Activated B cell treated with CpG ODN at 0.5 μM for 24 hours (primary cell): ENCODE measurements at regions of chr11 and their contacts with region 1.

Region 1: DNA sequence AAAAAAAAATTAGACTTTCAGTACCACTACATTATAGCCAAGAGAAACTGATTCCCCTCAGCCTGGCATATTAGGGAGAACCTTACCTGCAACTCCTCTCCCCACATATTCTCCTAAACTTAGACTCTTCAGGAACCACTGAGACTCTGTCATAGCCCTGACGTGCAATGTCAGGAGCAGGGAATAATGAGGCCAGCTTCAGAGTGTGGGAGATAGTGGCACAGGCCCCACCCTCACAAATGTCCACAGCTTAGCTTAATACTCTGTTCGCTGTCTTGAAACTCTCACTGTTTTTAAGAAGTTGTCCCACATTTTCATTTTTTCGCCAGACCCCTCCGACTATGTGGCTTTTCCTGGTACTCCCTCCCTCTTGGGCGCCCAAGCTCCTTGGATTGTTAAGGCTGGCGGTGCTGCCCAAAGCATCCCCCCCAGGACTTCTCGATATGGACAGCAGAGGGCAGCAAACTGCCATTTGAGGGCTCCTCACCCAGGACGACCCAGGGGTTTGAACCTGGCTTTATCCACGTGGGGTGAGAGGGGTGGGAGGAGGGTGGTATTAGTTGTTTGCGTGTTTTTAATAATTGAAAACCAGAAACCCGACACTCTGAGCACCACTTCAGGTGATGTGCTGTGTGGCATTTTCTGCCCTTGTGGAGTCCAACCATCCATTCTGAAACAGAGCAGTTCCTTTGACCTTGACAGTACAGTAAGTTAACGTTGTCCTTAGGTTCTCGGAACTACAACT is 45.2 kb upstream of the RASSF10 start:
- DNase-seq: peak; percentile 40
- ATAC-seq: peak; percentile 49
- H3K4me3 Mint-ChIP-seq: no peak overlapping the region
- H3K27ac Mint-ChIP-seq: no peak overlapping the region
- H3K4me1 Mint-ChIP-seq: no peaks in the 10 kb centered on the region
- H3K27me3 Mint-ChIP-seq: no peaks in the 10 kb centered on the region
- CTCF ChIP-seq: no peak

Region 2: GRCh38 chr11:12944889-12945517 is 19.0 kb before region 1 on chr11:
- CTCF ChIA-PET with region 1: no interaction called
- POLR2A ChIA-PET with region 1: no interaction called
- intact Hi-C with region 1: no loop called
- DNase-seq: no peak
- ATAC-seq: no peak
- H3K4me3 Mint-ChIP-seq: no peak overlapping the region
- H3K27ac Mint-ChIP-seq: no peak overlapping the region
- H3K4me1 Mint-ChIP-seq: no peaks in the 10 kb centered on the region
- H3K27me3 Mint-ChIP-seq: peaks cover 11% of the 10 kb centered on the region
- CTCF ChIP-seq: no peak

Region 3: GRCh38 chr11:12981676-12982531 is 17.9 kb after region 1 on chr11:
- CTCF ChIA-PET with region 1: no interaction called
- POLR2A ChIA-PET with region 1: no interaction called
- intact Hi-C with region 1: no loop called
- DNase-seq: no peak
- ATAC-seq: no peak
- H3K4me3 Mint-ChIP-seq: no peak overlapping the region
- H3K27ac Mint-ChIP-seq: no peak overlapping the region
- H3K4me1 Mint-ChIP-seq: no peaks in the 10 kb centered on the region
- H3K27me3 Mint-ChIP-seq: peaks cover 11% of the 10 kb centered on the region
- CTCF ChIP-seq: no peak

Region 4: GRCh38 chr11:13183094-13183825 is 219.3 kb after region 1 on chr11:
- CTCF ChIA-PET with region 1: no interaction called
- POLR2A ChIA-PET with region 1: no interaction called
- intact Hi-C with region 1: loop called (anchors 1 kb)
- DNase-seq: no peak
- ATAC-seq: no peak
- H3K4me3 Mint-ChIP-seq: no peak overlapping the region
- H3K27ac Mint-ChIP-seq: no peak overlapping the region
- H3K4me1 Mint-ChIP-seq: no peaks in the 10 kb centered on the region
- H3K27me3 Mint-ChIP-seq: peaks cover 4% of the 10 kb centered on the region
- CTCF ChIP-seq: no peak

Region 5: DNA sequence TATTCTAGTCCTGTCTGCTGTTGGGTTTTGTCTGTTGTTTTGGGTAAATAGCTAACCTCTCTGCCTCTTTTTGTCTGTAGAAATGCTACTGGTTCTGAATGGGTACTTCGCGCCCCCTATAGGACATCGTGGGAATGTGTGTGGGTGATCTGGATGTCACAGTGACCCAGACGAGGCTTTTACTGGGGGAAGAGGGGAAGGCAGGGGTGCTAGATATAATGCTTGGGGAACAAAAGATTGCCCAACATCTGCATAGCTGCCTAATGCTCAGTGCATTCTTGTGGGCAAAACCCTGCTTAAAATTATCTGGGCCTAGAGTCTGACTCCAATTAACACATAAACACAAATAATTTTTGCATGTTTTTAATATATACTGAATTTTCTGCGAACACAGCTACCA is 371.4 kb after region 1 on chr11:
- CTCF ChIA-PET with region 1: interaction called, 7 read pairs
- POLR2A ChIA-PET with region 1: no interaction called
- intact Hi-C with region 1: loop called (anchors 2 kb)
- DNase-seq: no peak
- ATAC-seq: peak; percentile 82
- H3K4me3 Mint-ChIP-seq: no peak overlapping the region
- H3K27ac Mint-ChIP-seq: no peak overlapping the region
- H3K4me1 Mint-ChIP-seq: peaks cover 48% of the 10 kb centered on the region
- H3K27me3 Mint-ChIP-seq: no peaks in the 10 kb centered on the region
- CTCF ChIP-seq: no peak

Region 6: GRCh38 chr11:13384908-13385640 is 421.1 kb after region 1 on chr11:
- CTCF ChIA-PET with region 1: interaction called, 10 read pairs
- POLR2A ChIA-PET with region 1: no interaction called
- intact Hi-C with region 1: loop called (anchors 1 kb)
- DNase-seq: no peak
- ATAC-seq: no peak
- H3K4me3 Mint-ChIP-seq: no peak overlapping the region
- H3K27ac Mint-ChIP-seq: no peak overlapping the region
- H3K4me1 Mint-ChIP-seq: no peaks in the 10 kb centered on the region
- H3K27me3 Mint-ChIP-seq: no peaks in the 10 kb centered on the region
- CTCF ChIP-seq: no peak

Region 7: GRCh38 chr11:13680501-13681264 is 716.7 kb after region 1 on chr11:
- CTCF ChIA-PET with region 1: no interaction called
- POLR2A ChIA-PET with region 1: no interaction called
- intact Hi-C with region 1: loop called (anchors 5 kb)
- DNase-seq: no peak
- ATAC-seq: peak; percentile 74
- H3K4me3 Mint-ChIP-seq: no peak overlapping the region
- H3K27ac Mint-ChIP-seq: peak overlapping the region; percentile 85
- H3K4me1 Mint-ChIP-seq: peaks cover 42% of the 10 kb centered on the region
- H3K27me3 Mint-ChIP-seq: no peaks in the 10 kb centered on the region
- CTCF ChIP-seq: no peak